MCF 10A (cell line): ENCODE measurements at regions of chr1 and their contacts with region 1.

Region 1: GRCh38 chr1:205919026-205919746 is 24.1 kb downstream of the SLC26A9 start:
- DNase-seq: peak; percentile 95
- H3K4me3 Mint-ChIP-seq: no peak overlapping the region
- H3K27ac Mint-ChIP-seq: no peak overlapping the region
- H3K4me1 Mint-ChIP-seq: peaks cover 8% of the 10 kb centered on the region
- H3K27me3 Mint-ChIP-seq: peaks cover 27% of the 10 kb centered on the region
- CTCF ChIP-seq: peak; percentile 100

Region 2: GRCh38 chr1:205791568-205792180 is 127.5 kb before region 1 on chr1:
- CTCF ChIA-PET with region 1: interaction called, 98 read pairs
- POLR2A ChIA-PET with region 1: no interaction called
- intact Hi-C with region 1: loop called (anchors 1 kb)
- DNase-seq: peak; percentile 89
- H3K4me3 Mint-ChIP-seq: no peak overlapping the region
- H3K27ac Mint-ChIP-seq: no peak overlapping the region
- H3K4me1 Mint-ChIP-seq: no peaks in the 10 kb centered on the region
- H3K27me3 Mint-ChIP-seq: no peaks in the 10 kb centered on the region
- CTCF ChIP-seq: peak; percentile 99

Region 3: DNA sequence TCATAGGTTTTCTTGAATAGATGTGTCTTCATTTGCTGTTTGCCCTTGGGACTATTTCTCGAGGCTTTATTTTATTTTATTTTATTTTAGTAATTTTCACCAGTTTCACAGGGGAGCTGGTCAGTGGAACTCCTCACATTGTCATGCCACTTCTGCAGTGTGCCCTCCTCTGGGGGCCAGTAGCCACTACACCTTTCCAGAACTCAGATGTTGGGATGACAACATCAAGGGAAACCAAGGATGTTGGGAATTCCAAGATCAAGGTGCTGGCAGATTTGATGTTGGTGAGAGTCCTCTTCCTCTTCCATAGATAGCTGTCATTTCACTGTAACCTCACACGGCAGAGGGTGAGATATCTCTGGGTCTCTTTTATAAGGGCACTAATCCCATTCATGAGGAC is 11.4 kb before region 1 on chr1:
- CTCF ChIA-PET with region 1: interaction called, 29 read pairs
- POLR2A ChIA-PET with region 1: interaction called, 4 read pairs
- intact Hi-C with region 1: no loop called
- DNase-seq: peak; percentile 86
- H3K4me3 Mint-ChIP-seq: no peak overlapping the region
- H3K27ac Mint-ChIP-seq: peak overlapping the region; percentile 11
- H3K4me1 Mint-ChIP-seq: peaks cover 13% of the 10 kb centered on the region
- H3K27me3 Mint-ChIP-seq: peaks cover 28% of the 10 kb centered on the region
- CTCF ChIP-seq: peak; percentile 93

Region 4: DNA sequence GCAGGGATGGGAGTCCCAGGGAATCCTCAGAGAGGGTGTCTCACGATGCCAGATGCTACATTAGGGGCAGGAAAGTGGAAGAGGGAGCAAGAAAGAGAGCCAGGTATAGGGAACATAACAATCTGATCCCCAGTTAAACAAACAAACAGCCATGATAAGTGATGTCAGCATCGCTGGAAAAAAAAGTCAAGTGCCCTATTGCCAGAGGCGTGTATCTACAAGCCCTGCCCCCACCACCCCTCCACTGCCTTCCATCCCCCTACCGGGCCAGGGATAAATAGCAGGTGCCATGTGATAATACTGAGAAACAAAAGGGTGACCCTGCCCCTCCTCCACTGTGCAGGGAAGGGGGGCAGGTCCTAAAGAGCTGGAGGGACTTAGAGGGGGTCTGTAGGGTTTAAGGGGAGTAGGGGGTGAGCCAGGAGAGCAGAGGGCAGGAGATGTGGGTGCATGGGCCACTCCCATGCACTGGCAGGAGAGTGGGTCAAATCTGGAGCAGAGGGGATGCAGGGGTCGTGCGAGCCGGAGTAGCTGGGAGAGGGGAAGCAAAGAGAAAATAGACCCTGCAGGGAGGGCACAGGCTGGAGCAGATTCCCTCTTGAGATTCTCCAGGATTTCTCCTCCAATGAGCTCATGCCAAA is 20.6 kb after region 1 on chr1:
- CTCF ChIA-PET with region 1: interaction called, 56 read pairs
- POLR2A ChIA-PET with region 1: interaction called, 4 read pairs
- intact Hi-C with region 1: no loop called
- DNase-seq: peak; percentile 65
- H3K4me3 Mint-ChIP-seq: no peak overlapping the region
- H3K27ac Mint-ChIP-seq: no peak overlapping the region
- H3K4me1 Mint-ChIP-seq: peaks cover 29% of the 10 kb centered on the region
- H3K27me3 Mint-ChIP-seq: peaks cover 88% of the 10 kb centered on the region
- CTCF ChIP-seq: no peak

Region 5: DNA sequence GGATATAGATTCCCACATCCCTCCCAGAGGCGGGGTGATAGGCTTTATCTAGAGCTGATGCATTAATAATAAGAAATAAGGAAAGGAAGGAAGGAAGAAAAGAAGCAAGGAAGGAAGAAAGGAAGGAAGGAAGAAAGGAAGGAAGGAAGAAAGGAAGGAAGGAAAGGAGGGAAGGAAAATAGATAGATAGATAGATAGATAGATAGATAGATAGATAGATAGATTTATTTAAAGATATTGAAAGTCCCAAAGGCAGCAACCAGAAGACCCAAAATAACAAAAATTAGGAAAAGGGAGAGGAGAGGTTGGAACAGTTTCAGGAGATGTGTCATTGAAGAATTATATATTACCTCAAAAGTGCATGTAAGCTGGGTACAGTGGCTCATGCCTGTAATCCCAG is 36.3 kb after region 1 on chr1:
- CTCF ChIA-PET with region 1: interaction called, 138 read pairs
- POLR2A ChIA-PET with region 1: interaction called, 10 read pairs
- intact Hi-C with region 1: no loop called
- DNase-seq: no peak
- H3K4me3 Mint-ChIP-seq: no peak overlapping the region
- H3K27ac Mint-ChIP-seq: no peak overlapping the region
- H3K4me1 Mint-ChIP-seq: peaks cover 28% of the 10 kb centered on the region
- H3K27me3 Mint-ChIP-seq: peaks cover 77% of the 10 kb centered on the region
- CTCF ChIP-seq: no peak

Region 6: GRCh38 chr1:205967555-205968335 is 48.6 kb after region 1 on chr1:
- CTCF ChIA-PET with region 1: interaction called, 111 read pairs
- POLR2A ChIA-PET with region 1: interaction called, 20 read pairs
- intact Hi-C with region 1: no loop called
- DNase-seq: peak; percentile 67
- H3K4me3 Mint-ChIP-seq: no peak overlapping the region
- H3K27ac Mint-ChIP-seq: no peak overlapping the region
- H3K4me1 Mint-ChIP-seq: peaks cover 29% of the 10 kb centered on the region
- H3K27me3 Mint-ChIP-seq: peaks cover 5% of the 10 kb centered on the region
- CTCF ChIP-seq: no peak

Region 7: DNA sequence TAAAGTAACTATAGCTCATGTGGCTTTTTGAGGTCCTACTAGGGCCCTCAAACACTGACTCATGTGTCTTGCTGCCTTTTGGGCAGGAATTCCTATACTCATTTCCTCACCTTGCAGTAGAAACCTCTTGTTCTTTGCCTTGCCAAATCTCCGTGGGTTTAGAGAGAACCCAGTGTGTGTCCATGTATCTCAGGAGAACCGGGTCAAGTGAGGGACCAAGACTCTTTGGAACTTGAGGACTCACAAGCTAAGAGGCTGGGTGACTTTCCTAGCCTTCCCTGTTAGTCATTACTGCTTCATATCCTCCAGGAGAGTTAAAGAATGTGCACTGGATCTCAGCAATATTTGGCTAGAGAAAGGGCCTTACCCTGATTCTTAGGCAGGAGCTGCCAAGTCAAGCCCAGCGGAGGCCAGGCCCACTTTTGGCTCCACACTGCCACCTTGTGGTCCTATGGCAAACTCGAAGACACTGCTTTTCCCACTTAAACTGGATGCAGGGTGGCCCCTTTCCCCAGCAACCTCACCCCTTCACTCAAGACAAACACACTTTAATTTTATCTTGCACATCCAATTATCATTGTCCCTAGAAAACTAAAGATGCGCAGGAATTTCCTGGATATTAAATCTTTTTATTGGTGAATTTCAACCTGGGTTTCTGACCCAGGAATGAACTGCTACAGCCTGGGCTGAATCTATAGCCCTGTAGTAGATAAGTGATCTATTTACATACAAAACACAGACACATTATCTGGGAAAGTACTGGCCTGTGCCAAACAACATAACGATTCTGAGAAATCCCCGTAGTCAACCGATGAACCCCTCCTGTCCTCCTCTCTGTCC is 187.4 kb after region 1 on chr1:
- CTCF ChIA-PET with region 1: interaction called, 146 read pairs
- POLR2A ChIA-PET with region 1: interaction called, 4 read pairs
- intact Hi-C with region 1: loop called (anchors 1 kb)
- DNase-seq: peak; percentile 96
- H3K4me3 Mint-ChIP-seq: no peak overlapping the region
- H3K27ac Mint-ChIP-seq: no peak overlapping the region
- H3K4me1 Mint-ChIP-seq: peaks cover 9% of the 10 kb centered on the region
- H3K27me3 Mint-ChIP-seq: peaks cover 5% of the 10 kb centered on the region
- CTCF ChIP-seq: peak; percentile 99